ENCODE measurements at regions of chr14 and their contacts with region 1.

Region 1: DNA sequence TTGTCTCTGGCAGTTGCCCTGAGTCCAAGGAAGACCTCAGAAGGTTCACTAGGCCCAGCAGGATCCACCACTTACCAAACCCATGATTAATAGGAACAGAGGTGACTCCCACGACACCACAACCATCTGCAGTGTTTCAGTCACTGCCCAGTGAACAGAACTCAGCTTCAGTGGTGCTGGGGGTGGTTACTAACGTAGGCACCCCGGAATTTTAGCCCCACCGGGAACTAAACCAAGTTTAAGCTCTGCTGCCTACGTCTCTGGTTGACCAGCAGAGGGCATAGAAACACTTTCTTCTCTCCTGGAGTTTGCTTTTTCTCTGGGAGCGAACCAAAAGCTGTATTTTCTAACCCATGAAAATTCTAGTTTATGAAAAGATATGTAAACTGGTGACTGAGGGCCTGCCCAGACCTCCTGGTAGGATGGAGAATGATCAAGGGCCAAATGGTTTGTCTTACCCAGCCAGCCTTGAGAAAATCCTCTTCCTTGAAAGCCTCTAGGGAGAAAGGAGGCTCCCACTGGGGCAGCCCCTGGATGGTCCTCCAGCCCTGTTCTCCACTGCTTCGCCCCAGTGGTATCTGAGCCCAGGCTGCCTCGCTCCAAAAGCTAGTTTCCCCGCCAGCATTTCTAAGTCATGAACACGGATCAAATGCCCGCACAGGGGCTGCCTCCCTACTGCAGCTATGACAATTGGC is 379.8 kb downstream of the DPF3 start:
- DNase-seq: no peak
- ATAC-seq: no peak
- H3K4me3 ChIP-seq: no peak overlapping the region
- H3K27ac ChIP-seq: no peak overlapping the region
- H3K4me1 ChIP-seq: no peaks in the 10 kb centered on the region
- H3K27me3 ChIP-seq: no peaks in the 10 kb centered on the region
- CTCF ChIP-seq: peak in 6 of 7 experiments; percentile 27 to 51 (median 42)
- POLR2A ChIP-seq: no peak

Region 2: DNA sequence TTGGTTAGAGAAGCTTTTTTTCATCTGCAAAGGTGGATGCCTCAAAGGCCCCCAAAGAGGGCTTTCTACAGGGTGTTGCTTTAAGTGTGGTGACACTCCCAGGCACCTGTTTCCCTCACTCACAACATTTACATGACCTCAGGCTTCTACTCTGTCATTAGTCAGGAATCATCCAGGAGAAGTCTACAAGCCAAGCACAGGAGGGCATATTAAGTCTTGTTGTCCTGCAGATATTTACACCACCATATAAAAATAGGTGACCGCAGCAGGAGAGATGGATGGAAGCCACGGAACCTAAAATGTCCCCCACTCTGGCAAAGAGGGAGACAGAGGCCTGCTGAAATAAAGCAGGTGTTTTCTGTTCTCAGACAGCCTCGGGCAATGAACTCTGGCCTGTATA is 387.2 kb after region 1 on chr14:
- intact Hi-C with region 1: loop called (anchors 2 kb)
- DNase-seq: no peak
- ATAC-seq: no peak
- H3K4me3 ChIP-seq: no peak overlapping the region
- H3K27ac ChIP-seq: no peak overlapping the region
- H3K4me1 ChIP-seq: no peaks in the 10 kb centered on the region
- H3K27me3 ChIP-seq: no peaks in the 10 kb centered on the region
- CTCF ChIP-seq: no peak
- POLR2A ChIP-seq: no peak